ENCODE measurements at regions of chrX and their contacts with region 1.

Region 1: GRCh38 chrX:27619975-27620374 is 29.8 kb downstream of the DCAF8L2 start:
- DNase-seq: peak; percentile 53
- H3K4me3 ChIP-seq: no peak overlapping the region
- H3K27ac ChIP-seq: peak overlapping the region; percentile 65
- H3K4me1 ChIP-seq: peaks cover 15% of the 10 kb centered on the region
- H3K27me3 ChIP-seq: no peaks in the 10 kb centered on the region
- CTCF ChIP-seq: peak; percentile 13 to 18
- POLR2A ChIP-seq: no peak

Region 2: GRCh38 chrX:26851981-26852380 is 768.0 kb before region 1 on chrX:
- CTCF ChIA-PET with region 1: no interaction called
- POLR2A ChIA-PET with region 1: no interaction called
- dilution Hi-C with region 1: no loop called
- intact Hi-C with region 1: loop called (anchors 1 kb)
- DNase-seq: peak; percentile 87
- H3K4me3 ChIP-seq: no peak overlapping the region
- H3K27ac ChIP-seq: peak overlapping the region; percentile 18
- H3K4me1 ChIP-seq: peaks cover 10% of the 10 kb centered on the region
- H3K27me3 ChIP-seq: no peaks in the 10 kb centered on the region
- CTCF ChIP-seq: peak; percentile 6 to 12
- POLR2A ChIP-seq: no peak

Region 3: DNA sequence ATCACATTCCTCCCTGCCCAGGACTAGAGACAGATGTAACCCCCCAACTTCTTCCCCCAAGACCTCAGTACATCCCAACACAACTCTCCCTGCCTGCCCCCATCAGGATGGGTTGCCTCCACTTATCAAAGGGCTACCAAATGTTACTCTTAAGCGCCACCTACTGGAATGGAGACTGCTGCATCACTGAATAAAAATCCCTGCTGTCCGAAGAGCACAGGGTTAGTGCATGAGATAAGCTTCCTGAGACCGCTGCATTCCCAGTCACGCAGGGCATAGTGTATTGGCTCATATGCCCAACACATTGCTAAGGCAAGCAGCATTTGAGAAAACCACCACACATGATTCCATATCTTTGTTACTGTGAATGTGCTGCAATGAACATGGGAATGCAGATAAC is 701.3 kb before region 1 on chrX:
- CTCF ChIA-PET with region 1: no interaction called
- POLR2A ChIA-PET with region 1: no interaction called
- dilution Hi-C with region 1: no loop called
- intact Hi-C with region 1: loop called (anchors 1 kb)
- DNase-seq: peak; percentile 31
- H3K4me3 ChIP-seq: no peak overlapping the region
- H3K27ac ChIP-seq: no peak overlapping the region
- H3K4me1 ChIP-seq: peaks cover 36% of the 10 kb centered on the region
- H3K27me3 ChIP-seq: no peaks in the 10 kb centered on the region
- CTCF ChIP-seq: peak; percentile 17 to 26
- POLR2A ChIP-seq: no peak

Region 4: GRCh38 chrX:27309406-27309805 is 310.6 kb before region 1 on chrX:
- CTCF ChIA-PET with region 1: interaction called, 5 read pairs
- POLR2A ChIA-PET with region 1: interaction called, 4 read pairs
- dilution Hi-C with region 1: no loop called
- intact Hi-C with region 1: loop called (anchors 5 kb)
- DNase-seq: peak; percentile 89
- H3K4me3 ChIP-seq: no peak overlapping the region
- H3K27ac ChIP-seq: peak overlapping the region; percentile 77
- H3K4me1 ChIP-seq: peaks cover 21% of the 10 kb centered on the region
- H3K27me3 ChIP-seq: no peaks in the 10 kb centered on the region
- CTCF ChIP-seq: no peak
- POLR2A ChIP-seq: no peak

Region 5: GRCh38 chrX:27555514-27555913 is 64.5 kb before region 1 on chrX:
- CTCF ChIA-PET with region 1: interaction called, 46 read pairs
- POLR2A ChIA-PET with region 1: no interaction called
- dilution Hi-C with region 1: no loop called
- intact Hi-C with region 1: loop called (anchors 1 kb)
- DNase-seq: peak; percentile 38
- H3K4me3 ChIP-seq: no peak overlapping the region
- H3K27ac ChIP-seq: no peak overlapping the region
- H3K4me1 ChIP-seq: no peaks in the 10 kb centered on the region
- H3K27me3 ChIP-seq: no peaks in the 10 kb centered on the region
- CTCF ChIP-seq: peak; percentile 30 to 35
- POLR2A ChIP-seq: no peak

Region 6: DNA sequence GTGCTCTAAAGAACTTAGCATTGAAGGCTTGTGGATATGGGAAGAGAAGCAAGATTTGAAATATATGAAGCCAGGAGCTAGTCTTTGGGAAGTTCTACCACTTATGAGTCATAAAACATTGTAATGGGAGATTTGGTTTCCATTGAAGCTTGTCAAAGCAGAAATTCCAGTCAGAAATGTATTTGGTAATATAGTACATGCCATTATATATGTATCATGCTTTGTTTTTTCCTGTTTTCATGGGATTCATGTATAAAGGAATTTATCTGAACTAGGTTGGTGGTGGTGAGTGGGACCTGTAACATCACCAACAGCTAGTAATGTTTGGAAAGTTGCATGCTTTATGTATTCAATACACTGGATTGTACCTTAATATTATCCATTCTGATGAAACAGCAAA is 44.4 kb before region 1 on chrX:
- CTCF ChIA-PET with region 1: no interaction called
- POLR2A ChIA-PET with region 1: no interaction called
- dilution Hi-C with region 1: no loop called
- intact Hi-C with region 1: no loop called
- DNase-seq: peak; percentile 11
- H3K4me3 ChIP-seq: no peak overlapping the region
- H3K27ac ChIP-seq: peak overlapping the region; percentile 59
- H3K4me1 ChIP-seq: peaks cover 5% of the 10 kb centered on the region
- H3K27me3 ChIP-seq: no peaks in the 10 kb centered on the region
- CTCF ChIP-seq: no peak
- POLR2A ChIP-seq: no peak

Region 7: DNA sequence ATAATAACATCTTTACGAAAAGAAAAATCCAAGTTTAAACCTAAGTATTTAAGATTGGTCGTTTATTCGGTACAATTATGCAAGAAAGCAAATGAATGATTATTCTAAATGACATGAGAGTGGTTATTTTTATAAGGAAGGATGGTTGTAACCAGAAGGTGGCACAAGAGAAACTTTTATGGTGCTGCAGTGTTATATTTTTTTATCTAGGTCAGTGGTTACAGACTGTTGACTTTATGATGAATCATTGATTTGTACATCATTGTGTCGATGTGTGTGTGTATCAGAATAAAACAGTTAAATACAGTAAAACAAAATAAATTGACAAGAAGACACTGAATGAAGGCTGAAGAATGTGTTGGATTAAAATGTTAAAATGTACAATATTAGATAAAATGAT is 20.0 kb before region 1 on chrX:
- CTCF ChIA-PET with region 1: interaction called, 19 read pairs
- POLR2A ChIA-PET with region 1: no interaction called
- dilution Hi-C with region 1: no loop called
- intact Hi-C with region 1: loop called (anchors 1 kb)
- DNase-seq: peak; percentile 70
- H3K4me3 ChIP-seq: no peak overlapping the region
- H3K27ac ChIP-seq: peak overlapping the region; percentile 50
- H3K4me1 ChIP-seq: peaks cover 9% of the 10 kb centered on the region
- H3K27me3 ChIP-seq: no peaks in the 10 kb centered on the region
- CTCF ChIP-seq: no peak
- POLR2A ChIP-seq: no peak

Region 8: GRCh38 chrX:27890611-27891010 is 270.6 kb after region 1 on chrX:
- CTCF ChIA-PET with region 1: no interaction called
- POLR2A ChIA-PET with region 1: no interaction called
- dilution Hi-C with region 1: no loop called
- intact Hi-C with region 1: loop called (anchors 1 kb)
- DNase-seq: peak; percentile 80
- H3K4me3 ChIP-seq: no peak overlapping the region
- H3K27ac ChIP-seq: peak overlapping the region; percentile 80
- H3K4me1 ChIP-seq: peaks cover 14% of the 10 kb centered on the region
- H3K27me3 ChIP-seq: no peaks in the 10 kb centered on the region
- CTCF ChIP-seq: no peak
- POLR2A ChIP-seq: no peak

Measured in endothelial cell of umbilical vein (primary cell).